Endothelial cell of umbilical vein (primary cell): ENCODE measurements at regions of chr10 and their contacts with region 1.

Region 1: DNA sequence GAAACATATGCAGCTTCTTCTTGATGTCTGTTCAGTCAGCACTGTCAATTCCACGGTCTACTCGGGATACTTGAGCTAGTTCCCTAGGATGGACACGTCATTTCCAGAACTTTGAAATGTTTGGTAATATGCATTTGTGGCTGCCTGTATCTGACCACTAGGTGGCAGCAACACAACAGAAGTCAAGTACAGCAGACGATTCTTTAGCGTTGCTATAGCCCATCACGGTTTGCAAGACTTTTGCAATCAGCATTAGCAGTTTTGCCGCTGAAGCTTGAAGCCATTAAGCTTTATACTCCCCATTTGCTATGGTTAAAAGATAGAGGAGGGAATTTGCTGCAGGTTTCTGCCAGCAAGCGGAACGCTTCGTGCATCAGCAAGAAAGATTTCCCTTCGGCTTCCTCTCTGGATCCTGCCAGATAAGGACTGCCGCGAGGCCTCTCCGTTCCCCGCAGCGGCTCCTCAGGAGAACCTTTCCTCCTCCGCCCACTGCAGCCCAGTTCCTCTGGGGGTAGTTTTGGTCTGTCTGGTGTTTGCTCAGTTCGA is 63.5 kb downstream of the ABCC2 start:
- DNase-seq: peak; percentile 94
- H3K4me3 ChIP-seq: peak overlapping the region in 1 of 3 experiments; percentile 41
- H3K27ac ChIP-seq: peak overlapping the region; percentile 10
- H3K4me1 ChIP-seq: peaks cover 18% of the 10 kb centered on the region
- H3K27me3 ChIP-seq: no peaks in the 10 kb centered on the region
- CTCF ChIP-seq: peak; percentile 72 to 94
- POLR2A ChIP-seq: no peak

Region 2: GRCh38 chr10:99620713-99621453 is 225.0 kb before region 1 on chr10:
- CTCF ChIA-PET with region 1: interaction called, 3 read pairs
- POLR2A ChIA-PET with region 1: no interaction called
- dilution Hi-C with region 1: no loop called
- intact Hi-C with region 1: loop called (anchors 10 kb)
- DNase-seq: peak; percentile 94
- H3K4me3 ChIP-seq: peak overlapping the region; percentile 24 to 57 (median 44)
- H3K27ac ChIP-seq: peak overlapping the region; percentile 93
- H3K4me1 ChIP-seq: peaks cover 21% of the 10 kb centered on the region
- H3K27me3 ChIP-seq: no peaks in the 10 kb centered on the region
- CTCF ChIP-seq: no peak
- POLR2A ChIP-seq: no peak

Region 3: DNA sequence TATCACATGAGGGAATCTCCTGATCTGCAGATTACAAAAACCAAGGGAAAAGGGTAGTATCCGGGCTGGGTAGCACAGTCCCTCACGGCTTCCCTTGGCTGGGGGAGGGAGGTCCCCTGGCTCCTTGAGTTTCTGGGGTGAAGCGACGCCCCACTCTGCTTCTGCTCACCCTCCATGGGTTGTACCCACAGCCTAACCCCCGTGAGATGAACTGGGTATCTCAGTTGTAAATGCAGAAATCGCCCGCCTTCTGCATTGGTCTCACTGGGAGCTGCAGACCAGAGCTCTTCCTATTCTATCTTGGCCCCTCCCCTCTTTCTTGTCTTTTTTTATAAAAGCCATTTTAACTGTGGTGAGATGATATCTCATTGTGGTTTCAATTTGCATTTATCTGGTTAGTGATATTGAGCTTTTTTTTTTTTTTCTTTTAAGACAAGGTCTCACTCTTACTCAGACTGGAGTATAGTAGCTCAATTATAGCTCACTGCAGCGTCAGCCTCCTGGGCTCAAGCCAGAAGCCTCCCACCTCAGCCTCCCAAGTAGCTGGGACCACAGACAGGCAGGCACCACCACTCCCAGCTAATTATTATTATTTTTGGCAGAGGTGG is 24.3 kb after region 1 on chr10:
- CTCF ChIA-PET with region 1: interaction called, 11 read pairs
- POLR2A ChIA-PET with region 1: no interaction called
- dilution Hi-C with region 1: no loop called
- intact Hi-C with region 1: no loop called
- DNase-seq: no peak
- H3K4me3 ChIP-seq: no peak overlapping the region
- H3K27ac ChIP-seq: no peak overlapping the region
- H3K4me1 ChIP-seq: peaks cover 4% of the 10 kb centered on the region
- H3K27me3 ChIP-seq: no peaks in the 10 kb centered on the region
- CTCF ChIP-seq: no peak
- POLR2A ChIP-seq: peak; percentile 25

Region 4: GRCh38 chr10:99915414-99915813 is 69.5 kb after region 1 on chr10:
- CTCF ChIA-PET with region 1: no interaction called
- POLR2A ChIA-PET with region 1: no interaction called
- dilution Hi-C with region 1: no loop called
- intact Hi-C with region 1: no loop called
- DNase-seq: no peak
- H3K4me3 ChIP-seq: no peak overlapping the region
- H3K27ac ChIP-seq: no peak overlapping the region
- H3K4me1 ChIP-seq: peaks cover 44% of the 10 kb centered on the region
- H3K27me3 ChIP-seq: no peaks in the 10 kb centered on the region
- CTCF ChIP-seq: no peak
- POLR2A ChIP-seq: no peak

Region 5: GRCh38 chr10:99938563-99938962 is 92.7 kb after region 1 on chr10:
- CTCF ChIA-PET with region 1: no interaction called
- POLR2A ChIA-PET with region 1: no interaction called
- dilution Hi-C with region 1: no loop called
- intact Hi-C with region 1: no loop called
- DNase-seq: no peak
- H3K4me3 ChIP-seq: no peak overlapping the region
- H3K27ac ChIP-seq: peak overlapping the region; percentile 32
- H3K4me1 ChIP-seq: peaks cover 33% of the 10 kb centered on the region
- H3K27me3 ChIP-seq: no peaks in the 10 kb centered on the region
- CTCF ChIP-seq: no peak
- POLR2A ChIP-seq: no peak

Region 6: DNA sequence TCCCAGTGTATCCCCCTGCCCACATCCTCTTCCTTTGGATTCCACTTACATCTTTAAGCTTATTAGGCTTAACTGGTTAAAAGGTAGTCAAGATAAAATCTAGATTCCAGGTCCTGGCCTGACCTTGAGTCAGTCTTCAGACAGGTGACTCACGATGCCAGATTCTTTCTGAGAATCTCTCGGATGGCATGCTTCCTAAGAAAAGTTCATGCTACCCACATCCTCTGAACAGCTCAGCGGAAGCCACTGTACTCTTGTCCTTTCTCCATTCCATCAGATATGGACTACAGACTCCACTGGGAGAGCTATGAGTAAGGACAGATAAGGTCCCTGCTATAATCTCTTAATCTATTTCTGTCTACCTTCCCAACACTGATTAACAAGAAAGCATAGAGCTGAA is 120.4 kb after region 1 on chr10:
- CTCF ChIA-PET with region 1: interaction called, 27 read pairs
- POLR2A ChIA-PET with region 1: interaction called, 3 read pairs
- dilution Hi-C with region 1: no loop called
- intact Hi-C with region 1: loop called (anchors 1 kb)
- DNase-seq: peak; percentile 93
- H3K4me3 ChIP-seq: peak overlapping the region in 1 of 3 experiments; percentile 6
- H3K27ac ChIP-seq: peak overlapping the region; percentile 96
- H3K4me1 ChIP-seq: peaks cover 69% of the 10 kb centered on the region
- H3K27me3 ChIP-seq: no peaks in the 10 kb centered on the region
- CTCF ChIP-seq: no peak
- POLR2A ChIP-seq: peak; percentile 43

Region 7: DNA sequence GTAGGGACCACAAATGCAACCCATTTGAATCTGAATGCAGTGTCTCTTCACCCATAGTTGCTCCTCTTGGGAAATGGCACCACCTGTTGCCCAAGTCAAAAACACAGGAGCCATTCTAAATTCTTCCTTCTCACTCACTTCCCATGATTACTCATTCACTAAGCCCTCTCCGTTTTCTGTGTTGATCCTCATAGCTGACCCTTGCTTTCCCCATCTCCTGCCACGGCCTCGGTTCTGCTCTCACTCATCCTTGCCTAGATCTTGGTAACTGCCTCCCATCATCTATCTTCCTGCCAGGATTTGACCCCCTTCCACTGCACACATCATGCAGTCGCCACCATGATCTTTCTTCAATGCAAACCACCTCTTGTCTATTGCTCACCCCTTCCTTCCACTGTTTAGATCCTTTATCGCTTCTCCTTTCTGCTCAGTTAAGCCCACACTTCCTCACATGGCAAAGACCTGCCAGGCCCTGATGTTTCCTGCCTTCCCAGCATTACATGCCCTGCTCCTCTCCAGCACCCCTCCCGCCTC is 254.8 kb after region 1 on chr10:
- CTCF ChIA-PET with region 1: interaction called, 8 read pairs
- POLR2A ChIA-PET with region 1: no interaction called
- dilution Hi-C with region 1: no loop called
- intact Hi-C with region 1: loop called (anchors 1 kb)
- DNase-seq: peak; percentile 70
- H3K4me3 ChIP-seq: no peak overlapping the region
- H3K27ac ChIP-seq: peak overlapping the region; percentile 1
- H3K4me1 ChIP-seq: peaks cover 16% of the 10 kb centered on the region
- H3K27me3 ChIP-seq: peaks cover 0 to 3% of the 10 kb centered on the region in 2 experiments
- CTCF ChIP-seq: peak; percentile 13 to 25
- POLR2A ChIP-seq: no peak

Region 8: DNA sequence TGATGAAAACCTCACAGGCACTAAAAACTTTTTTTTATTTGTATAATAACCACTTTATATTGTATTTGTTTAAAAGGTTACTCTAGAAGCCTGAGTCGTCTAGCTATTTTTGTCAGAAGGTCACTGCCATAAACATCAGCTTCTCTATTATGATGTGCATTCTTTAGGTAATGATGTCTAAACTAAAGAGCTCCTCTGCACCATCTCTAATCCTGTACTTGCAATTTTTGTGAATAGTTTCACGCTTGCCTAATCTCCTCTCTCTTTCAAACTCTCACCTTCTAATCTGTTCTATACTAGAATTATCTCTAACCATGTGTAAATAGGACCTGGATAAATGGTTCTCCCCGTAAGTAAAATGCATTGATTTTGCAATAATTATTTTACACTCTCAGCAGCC is 393.9 kb after region 1 on chr10:
- CTCF ChIA-PET with region 1: interaction called, 58 read pairs
- POLR2A ChIA-PET with region 1: no interaction called
- dilution Hi-C with region 1: no loop called
- intact Hi-C with region 1: loop called (anchors 1 kb)
- DNase-seq: no peak
- H3K4me3 ChIP-seq: no peak overlapping the region
- H3K27ac ChIP-seq: no peak overlapping the region
- H3K4me1 ChIP-seq: no peaks in the 10 kb centered on the region
- H3K27me3 ChIP-seq: no peaks in the 10 kb centered on the region
- CTCF ChIP-seq: no peak
- POLR2A ChIP-seq: no peak